ENCODE measurements at regions of chr11 and their contacts with region 1.

Region 1: GRCh38 chr11:9565822-9566560 is 7.5 kb upstream of the WEE1 start:
- DNase-seq: peak; percentile 99
- H3K4me3 ChIP-seq: no peak overlapping the region
- H3K27ac ChIP-seq: peak overlapping the region; percentile 96
- H3K4me1 ChIP-seq: peaks cover 31% of the 10 kb centered on the region
- H3K27me3 ChIP-seq: no peaks in the 10 kb centered on the region
- CTCF ChIP-seq: no peak
- POLR2A ChIP-seq: no peak

Region 2: DNA sequence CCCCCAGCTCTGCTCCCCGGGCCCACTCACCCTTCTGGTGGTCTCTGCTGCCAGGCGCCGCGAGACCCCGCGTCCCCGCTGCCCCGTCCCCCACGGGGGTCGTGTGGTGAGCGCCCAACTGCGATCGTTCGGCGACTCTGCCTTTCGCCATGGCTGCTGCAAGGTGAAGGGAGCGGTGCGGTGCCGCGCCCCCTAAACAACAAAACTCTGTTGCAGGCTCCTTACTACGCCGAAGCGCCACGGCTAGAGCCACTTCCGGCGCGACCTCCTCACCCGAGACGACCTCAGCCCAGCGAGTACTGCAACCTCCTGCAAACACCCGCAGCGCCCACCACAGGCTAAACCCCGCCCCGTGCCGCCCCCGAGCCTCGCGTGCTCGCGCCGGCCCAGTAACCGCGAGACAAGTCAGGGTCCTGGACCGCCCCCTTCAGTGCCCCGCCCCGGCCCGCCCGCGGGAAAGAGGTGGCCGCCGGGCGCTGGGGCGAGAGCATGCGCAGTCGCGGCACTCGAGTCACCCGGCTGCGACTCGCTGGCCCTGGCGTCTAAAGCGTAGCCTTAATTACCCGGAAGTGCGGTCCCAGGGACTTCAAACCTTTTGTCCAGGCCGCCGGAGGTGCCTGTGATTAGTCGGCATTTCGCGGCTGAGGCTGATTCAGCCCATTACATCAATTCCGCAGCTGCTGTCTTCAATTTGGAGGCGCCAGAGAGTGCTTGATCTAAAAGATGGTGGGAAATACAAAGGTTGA is 251.5 kb before region 1 on chr11 and contains the start of gene TMEM41B:
- CTCF ChIA-PET with region 1: no interaction called
- POLR2A ChIA-PET with region 1: no interaction called
- dilution Hi-C with region 1: no loop called
- intact Hi-C with region 1: loop called (anchors 1 kb)
- DNase-seq: peak; percentile 98
- H3K4me3 ChIP-seq: peak within 1 kb of the TSS; percentile 60 to 98 (median 93)
- H3K27ac ChIP-seq: peak within 1 kb of the TSS; percentile 87
- H3K4me1 ChIP-seq: peaks cover 15% of the 10 kb centered on the region
- H3K27me3 ChIP-seq: no peaks in the 10 kb centered on the region
- CTCF ChIP-seq: no peak
- POLR2A ChIP-seq: peak; percentile 80
- total RNA-seq, gene TMEM41B: 38.6 and 39.0 TPM in 2 replicates

Region 3: DNA sequence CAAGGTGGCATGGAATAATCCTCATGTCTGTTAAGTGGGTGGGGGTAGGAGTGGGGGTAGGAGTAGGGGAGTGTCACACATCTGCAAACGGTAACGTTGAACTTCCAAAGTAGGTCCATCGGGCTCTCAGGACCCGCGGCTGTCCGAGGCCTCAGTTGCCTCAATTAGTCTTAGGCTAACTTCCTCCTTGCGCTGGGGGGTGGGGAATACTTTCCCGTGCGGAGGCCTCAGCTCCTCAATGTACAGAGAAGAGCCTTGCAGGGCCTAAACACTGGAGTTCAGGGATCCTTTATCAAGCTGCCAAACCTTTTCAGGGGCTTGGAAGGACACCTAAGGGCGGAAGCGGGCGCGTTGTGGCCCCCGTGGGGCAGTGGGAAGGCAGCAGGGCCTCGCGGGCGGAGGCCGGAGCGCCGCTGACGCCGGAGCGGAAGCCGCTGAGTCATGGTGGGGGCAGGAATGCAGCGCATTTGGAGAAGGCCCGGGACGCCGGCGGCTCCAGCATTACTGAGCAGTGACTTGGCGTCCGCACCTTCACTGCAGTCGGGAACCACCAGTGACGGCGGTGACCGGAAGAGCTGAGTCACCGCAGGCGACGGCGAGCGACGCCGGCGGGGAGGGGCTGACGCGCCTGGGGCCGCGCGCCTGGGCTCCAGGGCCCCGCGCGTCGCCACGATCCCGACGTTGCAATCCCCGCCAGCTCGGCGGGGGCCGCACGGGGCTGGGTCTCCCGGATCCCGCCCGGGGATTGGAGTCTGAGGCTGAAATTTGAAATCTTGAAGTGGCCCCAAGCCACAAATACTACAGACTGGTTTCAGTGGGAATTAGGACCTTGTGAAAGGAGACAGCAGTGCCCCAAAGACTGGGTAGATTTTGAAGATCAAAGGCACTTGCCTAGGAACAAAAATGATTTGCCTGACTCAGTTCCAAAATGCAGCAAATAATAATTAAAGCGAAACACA is 201.8 kb before region 1 on chr11:
- CTCF ChIA-PET with region 1: no interaction called
- POLR2A ChIA-PET with region 1: no interaction called
- dilution Hi-C with region 1: no loop called
- intact Hi-C with region 1: loop called (anchors 1 kb)
- DNase-seq: peak; percentile 96
- H3K4me3 ChIP-seq: peak overlapping the region in 2 of 3 experiments; percentile 23 to 46
- H3K27ac ChIP-seq: peak overlapping the region; percentile 92
- H3K4me1 ChIP-seq: peaks cover 17% of the 10 kb centered on the region
- H3K27me3 ChIP-seq: no peaks in the 10 kb centered on the region
- CTCF ChIP-seq: no peak
- POLR2A ChIP-seq: peak; percentile 67

Region 4: DNA sequence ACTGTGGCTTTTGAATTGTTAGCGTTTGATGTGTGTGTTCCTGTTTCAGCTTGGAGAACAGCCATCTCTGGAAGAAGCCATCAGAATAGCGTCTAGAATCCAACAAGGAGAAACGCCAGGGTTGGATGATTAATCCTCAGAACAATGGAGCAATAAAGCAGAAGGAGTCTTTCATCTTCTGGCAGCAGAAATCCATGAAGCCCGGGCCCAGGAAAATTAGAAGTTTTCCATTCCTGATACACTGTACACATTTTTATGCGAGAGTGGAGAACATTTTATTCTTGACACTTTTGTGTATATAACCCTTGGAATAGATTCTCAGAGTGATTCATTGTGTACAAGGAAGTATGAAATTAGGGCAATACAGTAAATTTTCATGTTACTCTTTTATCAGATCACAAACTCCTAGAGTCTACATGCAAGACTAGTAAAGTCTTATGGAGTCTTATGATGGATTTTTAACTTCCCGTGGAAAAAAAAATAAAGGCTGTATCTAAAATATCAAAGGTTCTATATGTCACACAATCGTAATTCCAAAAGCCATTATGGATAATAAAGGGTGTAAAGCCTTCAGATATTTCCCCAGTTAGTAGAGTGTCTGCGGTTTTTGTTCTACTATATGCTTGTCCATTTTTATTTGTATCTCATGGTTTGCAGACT is 38.4 kb before region 1 on chr11:
- CTCF ChIA-PET with region 1: no interaction called
- POLR2A ChIA-PET with region 1: no interaction called
- dilution Hi-C with region 1: no loop called
- intact Hi-C with region 1: loop called (anchors 1 kb)
- DNase-seq: peak; percentile 96
- H3K4me3 ChIP-seq: peak overlapping the region in 1 of 3 experiments; percentile 20
- H3K27ac ChIP-seq: peak overlapping the region; percentile 82
- H3K4me1 ChIP-seq: peaks cover 27% of the 10 kb centered on the region
- H3K27me3 ChIP-seq: no peaks in the 10 kb centered on the region
- CTCF ChIP-seq: no peak
- POLR2A ChIP-seq: peak; percentile 21

Region 5: DNA sequence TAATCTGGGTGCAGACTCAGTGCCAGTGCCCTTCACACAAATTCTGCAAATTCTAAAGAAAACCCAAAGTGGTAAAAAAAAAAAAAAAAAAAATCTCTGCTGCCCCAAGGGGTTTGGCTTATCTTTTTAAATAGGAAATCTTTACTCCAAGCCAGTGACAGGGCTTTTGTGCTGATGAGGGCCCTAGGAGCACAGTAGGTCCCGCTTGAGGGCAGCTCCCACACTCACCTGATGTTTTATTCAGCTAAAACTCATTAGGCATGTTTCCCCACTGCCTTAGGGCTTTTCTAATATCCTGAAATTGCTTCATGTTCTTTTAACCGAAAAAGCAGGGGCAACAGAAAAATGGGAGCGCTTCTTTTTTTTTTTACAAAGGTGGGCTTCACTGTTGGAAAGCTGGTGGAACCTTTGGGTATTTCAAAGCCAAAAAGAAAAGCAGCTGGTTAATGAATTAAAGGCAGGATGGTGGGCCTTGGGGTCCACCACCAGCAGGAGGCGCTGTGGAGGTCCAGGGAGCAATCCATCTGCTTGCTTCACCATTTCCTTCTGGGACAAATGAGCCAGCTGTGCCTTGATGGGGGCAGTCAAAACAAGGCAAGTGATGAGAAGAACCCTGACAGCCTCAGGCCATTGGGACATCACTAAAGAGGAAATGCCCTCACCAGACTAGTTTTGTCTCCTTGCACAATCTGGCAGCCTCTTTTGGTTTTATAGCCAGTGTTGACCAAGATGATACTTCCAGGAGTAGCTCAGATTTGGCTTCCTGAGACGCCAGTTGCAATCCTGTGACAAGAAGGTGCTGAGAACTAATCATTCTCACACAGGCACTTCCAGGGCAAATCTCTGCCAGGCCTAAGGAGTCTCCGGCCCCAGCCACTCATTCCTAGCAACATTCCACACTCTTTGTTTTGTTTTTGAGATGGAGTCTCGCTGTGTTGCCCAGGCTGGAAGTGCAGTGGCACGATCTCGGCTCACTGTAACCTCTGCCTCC is 30.9 kb before region 1 on chr11:
- CTCF ChIA-PET with region 1: interaction called, 15 read pairs
- POLR2A ChIA-PET with region 1: no interaction called
- dilution Hi-C with region 1: no loop called
- intact Hi-C with region 1: no loop called
- DNase-seq: peak; percentile 66
- H3K4me3 ChIP-seq: no peak overlapping the region
- H3K27ac ChIP-seq: no peak overlapping the region
- H3K4me1 ChIP-seq: no peaks in the 10 kb centered on the region
- H3K27me3 ChIP-seq: no peaks in the 10 kb centered on the region
- CTCF ChIP-seq: peak; percentile 83 to 90
- POLR2A ChIP-seq: no peak

Region 6: DNA sequence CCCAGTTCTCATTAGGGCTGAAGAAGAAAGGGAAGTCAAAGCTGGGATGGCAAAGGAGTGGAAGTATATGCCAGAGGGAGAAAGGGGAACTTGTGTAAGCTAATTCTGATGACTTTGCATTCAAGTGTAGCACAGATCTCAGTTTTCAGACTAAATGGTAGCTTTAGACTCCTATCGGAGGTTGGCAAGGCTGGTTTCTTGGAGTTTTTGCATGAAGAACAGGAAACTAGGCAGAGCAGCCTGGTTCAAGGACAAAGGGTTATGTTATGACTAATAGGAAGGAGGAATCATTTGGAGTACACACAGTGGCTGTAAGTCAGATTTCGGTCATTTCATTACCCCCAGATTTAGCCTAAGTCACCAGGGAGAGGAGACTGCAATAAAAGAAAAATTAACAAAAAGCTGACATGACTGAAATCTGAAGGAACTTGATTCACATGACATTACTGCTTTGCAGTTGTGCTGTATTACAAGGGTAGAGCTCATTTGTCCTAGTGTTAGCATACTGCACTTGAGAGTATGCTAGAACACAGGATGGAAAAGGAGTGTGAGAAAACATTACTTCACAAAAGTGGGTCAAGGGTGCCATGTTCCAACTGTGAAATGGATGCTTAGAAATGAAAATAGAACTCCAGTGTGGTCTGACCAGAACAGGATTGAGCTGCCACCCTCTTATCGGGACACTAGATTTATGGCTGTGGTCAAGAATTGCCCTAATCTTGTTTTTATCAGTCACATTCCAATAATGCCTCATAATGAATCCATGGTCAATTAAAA is 762.5 kb after region 1 on chr11:
- CTCF ChIA-PET with region 1: no interaction called
- POLR2A ChIA-PET with region 1: no interaction called
- dilution Hi-C with region 1: no loop called
- intact Hi-C with region 1: loop called (anchors 5 kb)
- DNase-seq: peak; percentile 94
- H3K4me3 ChIP-seq: peak overlapping the region in 1 of 3 experiments; percentile 14
- H3K27ac ChIP-seq: peak overlapping the region; percentile 84
- H3K4me1 ChIP-seq: peaks cover 67% of the 10 kb centered on the region
- H3K27me3 ChIP-seq: no peaks in the 10 kb centered on the region
- CTCF ChIP-seq: no peak
- POLR2A ChIP-seq: peak; percentile 43